ENCODE measurements at regions of chr2 and their contacts with region 1.

Region 1: GRCh38 chr2:236769921-236770671 is 200.5 kb downstream of the ACKR3 start:
- DNase-seq: peak; percentile 99
- H3K4me3 ChIP-seq: 0 out of 2 replicates have a peak overlapping the region, but pooled peaks have one; percentile 3
- CTCF ChIP-seq: no peak

Region 2: GRCh38 chr2:236642584-236643291 is 127.4 kb before region 1 on chr2:
- CTCF ChIA-PET with region 1: no interaction called
- POLR2A ChIA-PET with region 1: interaction called, 10 read pairs
- DNase-seq: peak; percentile 89
- H3K4me3 ChIP-seq: peak overlapping the region; percentile 15
- CTCF ChIP-seq: no peak

Region 3: GRCh38 chr2:236745420-236746197 is 24.5 kb before region 1 on chr2:
- CTCF ChIA-PET with region 1: interaction called, 5 read pairs
- POLR2A ChIA-PET with region 1: interaction called, 82 read pairs
- DNase-seq: peak; percentile 61
- H3K4me3 ChIP-seq: peak overlapping the region; percentile 19
- CTCF ChIP-seq: no peak